B cell (primary cell): ENCODE measurements at regions of chr14 and their contacts with region 1.

Region 1: GRCh38 chr14:55094321-55095157 is 34.5 kb upstream of the LGALS3 start:
- DNase-seq: no peak
- ATAC-seq: no peak
- H3K4me3 ChIP-seq: no peak overlapping the region
- H3K4me3 Mint-ChIP-seq: no peak overlapping the region
- H3K27ac ChIP-seq: no peak overlapping the region
- H3K27ac Mint-ChIP-seq: no peak overlapping the region
- H3K4me1 ChIP-seq: peaks cover 14 to 19% of the 10 kb centered on the region in 2 donors
- H3K4me1 Mint-ChIP-seq: peaks cover 18% of the 10 kb centered on the region
- H3K27me3 ChIP-seq: no peaks in the 10 kb centered on the region
- H3K27me3 Mint-ChIP-seq: no peaks in the 10 kb centered on the region
- CTCF ChIP-seq: no peak

Region 2: GRCh38 chr14:53570411-53571387 is 1523.8 kb before region 1 on chr14:
- CTCF ChIA-PET with region 1: no interaction called
- POLR2A ChIA-PET with region 1: no interaction called
- intact Hi-C with region 1: no loop called
- DNase-seq: no peak
- ATAC-seq: peak; percentile 14
- H3K4me3 ChIP-seq: no peak overlapping the region
- H3K4me3 Mint-ChIP-seq: no peak overlapping the region
- H3K27ac ChIP-seq: no peak overlapping the region
- H3K27ac Mint-ChIP-seq: no peak overlapping the region
- H3K4me1 ChIP-seq: no peaks in the 10 kb centered on the region
- H3K4me1 Mint-ChIP-seq: no peaks in the 10 kb centered on the region
- H3K27me3 ChIP-seq: peaks cover 0 to 3% (median 0%) of the 10 kb centered on the region in 4 experiments
- H3K27me3 Mint-ChIP-seq: peaks cover 14% of the 10 kb centered on the region
- CTCF ChIP-seq: no peak

Region 3: GRCh38 chr14:55077155-55077554 is 17.4 kb before region 1 on chr14:
- CTCF ChIA-PET with region 1: interaction called, 19 read pairs
- POLR2A ChIA-PET with region 1: no interaction called
- intact Hi-C with region 1: loop called (anchors 2 kb)
- DNase-seq: no peak
- ATAC-seq: no peak
- H3K4me3 ChIP-seq: no peak overlapping the region
- H3K4me3 Mint-ChIP-seq: no peak overlapping the region
- H3K27ac ChIP-seq: no peak overlapping the region
- H3K27ac Mint-ChIP-seq: no peak overlapping the region
- H3K4me1 ChIP-seq: peaks cover 22 to 33% of the 10 kb centered on the region in 2 donors
- H3K4me1 Mint-ChIP-seq: peaks cover 35% of the 10 kb centered on the region
- H3K27me3 ChIP-seq: no peaks in the 10 kb centered on the region
- H3K27me3 Mint-ChIP-seq: no peaks in the 10 kb centered on the region
- CTCF ChIP-seq: no peak

Region 4: DNA sequence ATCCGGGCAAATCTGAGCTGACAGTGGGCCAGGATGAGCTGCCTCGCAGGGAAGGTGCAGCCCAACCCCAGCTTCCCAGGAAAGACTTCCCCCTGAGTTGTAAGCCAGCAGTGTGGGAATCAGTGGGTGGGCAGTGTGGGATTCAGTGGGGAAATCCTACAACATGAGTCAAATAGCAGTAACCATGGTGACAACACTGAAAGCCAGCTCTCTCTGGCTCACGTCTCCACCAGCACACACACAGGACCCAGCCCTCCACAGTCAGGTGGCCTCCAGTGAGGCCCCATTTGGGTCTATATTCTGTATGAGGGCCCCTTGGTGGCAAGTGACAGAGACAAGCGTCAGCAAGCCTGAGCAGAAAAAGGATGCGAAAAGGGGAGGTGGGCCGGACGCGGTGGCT is 28.6 kb after region 1 on chr14:
- CTCF ChIA-PET with region 1: no interaction called
- POLR2A ChIA-PET with region 1: no interaction called
- intact Hi-C with region 1: no loop called
- DNase-seq: no peak
- ATAC-seq: no peak
- H3K4me3 ChIP-seq: no peak overlapping the region
- H3K4me3 Mint-ChIP-seq: no peak overlapping the region
- H3K27ac ChIP-seq: no peak overlapping the region
- H3K27ac Mint-ChIP-seq: no peak overlapping the region
- H3K4me1 ChIP-seq: peaks cover 0 to 6% of the 10 kb centered on the region in 2 donors
- H3K4me1 Mint-ChIP-seq: peaks cover 4% of the 10 kb centered on the region
- H3K27me3 ChIP-seq: peaks cover 0 to 3% (median 0%) of the 10 kb centered on the region in 4 experiments
- H3K27me3 Mint-ChIP-seq: peaks cover 4% of the 10 kb centered on the region
- CTCF ChIP-seq: no peak

Region 5: DNA sequence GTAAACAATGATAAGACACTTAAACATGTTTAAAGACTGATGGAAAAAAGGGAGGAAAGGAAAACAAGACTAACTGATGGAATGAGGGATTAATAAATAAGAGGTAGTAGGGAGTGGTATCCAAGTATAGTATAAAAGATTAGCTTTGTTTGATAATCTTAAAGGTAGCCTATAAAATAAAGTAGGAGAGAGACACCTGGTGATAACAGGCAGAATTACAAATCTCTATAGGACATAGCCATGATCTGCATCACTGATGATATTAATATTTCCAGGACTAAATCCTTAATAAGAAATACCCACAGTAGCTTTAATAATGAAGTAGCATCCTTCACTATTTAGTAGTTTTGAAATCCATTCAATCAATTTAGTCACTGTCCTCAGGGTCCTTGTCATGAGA is 66.5 kb after region 1 on chr14:
- CTCF ChIA-PET with region 1: interaction called, 98 read pairs
- POLR2A ChIA-PET with region 1: interaction called, 3 read pairs
- intact Hi-C with region 1: loop called (anchors 1 kb)
- DNase-seq: peak; percentile 60
- ATAC-seq: peak; percentile 85
- H3K4me3 ChIP-seq: no peak overlapping the region
- H3K4me3 Mint-ChIP-seq: no peak overlapping the region
- H3K27ac ChIP-seq: no peak overlapping the region
- H3K27ac Mint-ChIP-seq: no peak overlapping the region
- H3K4me1 ChIP-seq: no peaks in the 10 kb centered on the region
- H3K4me1 Mint-ChIP-seq: peaks cover 2% of the 10 kb centered on the region
- H3K27me3 ChIP-seq: no peaks in the 10 kb centered on the region
- H3K27me3 Mint-ChIP-seq: no peaks in the 10 kb centered on the region
- CTCF ChIP-seq: peak; percentile 74

Region 6: GRCh38 chr14:55354500-55354899 is 260.0 kb after region 1 on chr14:
- CTCF ChIA-PET with region 1: no interaction called
- POLR2A ChIA-PET with region 1: no interaction called
- intact Hi-C with region 1: loop called (anchors 1 kb)
- DNase-seq: peak; percentile 64
- ATAC-seq: peak; percentile 82
- H3K4me3 ChIP-seq: no peak overlapping the region
- H3K4me3 Mint-ChIP-seq: no peak overlapping the region
- H3K27ac ChIP-seq: no peak overlapping the region
- H3K27ac Mint-ChIP-seq: no peak overlapping the region
- H3K4me1 ChIP-seq: peaks cover 0 to 3% of the 10 kb centered on the region in 2 donors
- H3K4me1 Mint-ChIP-seq: peaks cover 9% of the 10 kb centered on the region
- H3K27me3 ChIP-seq: no peaks in the 10 kb centered on the region
- H3K27me3 Mint-ChIP-seq: no peaks in the 10 kb centered on the region
- CTCF ChIP-seq: peak; percentile 71

Region 7: DNA sequence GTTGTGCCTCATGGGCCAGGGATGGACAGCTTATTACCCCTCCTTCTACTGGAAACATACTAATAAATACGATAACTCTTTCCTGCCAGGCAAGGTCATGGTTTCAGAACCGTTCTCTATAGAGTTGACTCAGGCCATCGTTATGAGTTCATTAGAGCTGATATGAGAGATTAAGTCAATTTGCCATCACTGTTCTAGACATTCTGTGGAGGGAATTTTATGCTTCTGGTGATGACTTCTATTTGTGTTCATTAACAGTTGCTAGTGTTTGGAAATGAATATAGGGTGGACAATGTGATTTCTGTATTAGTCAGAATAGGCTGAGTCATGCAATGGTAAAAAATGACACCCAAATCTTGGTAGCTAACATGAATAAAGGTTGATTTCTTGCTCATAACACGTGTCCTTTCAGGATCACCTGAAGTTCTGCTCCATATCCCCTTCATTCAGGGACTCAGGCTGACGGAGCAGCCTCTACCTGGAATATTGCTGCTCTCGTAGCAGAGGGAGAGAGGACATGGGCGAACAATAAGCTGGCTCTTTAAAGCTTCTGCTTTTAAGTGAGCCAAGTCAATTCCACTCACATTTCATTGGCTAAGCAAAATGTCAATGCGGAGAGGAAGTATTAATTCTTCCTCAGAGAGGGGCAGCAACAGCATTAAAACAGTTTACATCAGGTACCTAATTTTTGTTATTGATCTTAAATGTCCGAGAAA is 364.4 kb after region 1 on chr14:
- CTCF ChIA-PET with region 1: no interaction called
- POLR2A ChIA-PET with region 1: interaction called, 12 read pairs
- intact Hi-C with region 1: no loop called
- DNase-seq: no peak
- ATAC-seq: no peak
- H3K4me3 ChIP-seq: no peak overlapping the region
- H3K4me3 Mint-ChIP-seq: no peak overlapping the region
- H3K27ac ChIP-seq: no peak overlapping the region
- H3K27ac Mint-ChIP-seq: no peak overlapping the region
- H3K4me1 ChIP-seq: no peaks in the 10 kb centered on the region
- H3K4me1 Mint-ChIP-seq: no peaks in the 10 kb centered on the region
- H3K27me3 ChIP-seq: peaks cover 0 to 2% (median 0%) of the 10 kb centered on the region in 4 experiments
- H3K27me3 Mint-ChIP-seq: peaks cover 16% of the 10 kb centered on the region
- CTCF ChIP-seq: no peak